Cardiac septum (tissue), 1 donor: ENCODE measurements at regions of chr21 and their contacts with region 1.

Region 1: GRCh38 chr21:39088831-39089380 is 94.3 kb downstream of the PSMG1 start:
- DNase-seq: no peak

Region 2: GRCh38 chr21:38913120-38913892 is 175.6 kb before region 1 on chr21:
- intact Hi-C with region 1: loop called (anchors 5 kb)
- DNase-seq: peak; percentile 88

Region 3: DNA sequence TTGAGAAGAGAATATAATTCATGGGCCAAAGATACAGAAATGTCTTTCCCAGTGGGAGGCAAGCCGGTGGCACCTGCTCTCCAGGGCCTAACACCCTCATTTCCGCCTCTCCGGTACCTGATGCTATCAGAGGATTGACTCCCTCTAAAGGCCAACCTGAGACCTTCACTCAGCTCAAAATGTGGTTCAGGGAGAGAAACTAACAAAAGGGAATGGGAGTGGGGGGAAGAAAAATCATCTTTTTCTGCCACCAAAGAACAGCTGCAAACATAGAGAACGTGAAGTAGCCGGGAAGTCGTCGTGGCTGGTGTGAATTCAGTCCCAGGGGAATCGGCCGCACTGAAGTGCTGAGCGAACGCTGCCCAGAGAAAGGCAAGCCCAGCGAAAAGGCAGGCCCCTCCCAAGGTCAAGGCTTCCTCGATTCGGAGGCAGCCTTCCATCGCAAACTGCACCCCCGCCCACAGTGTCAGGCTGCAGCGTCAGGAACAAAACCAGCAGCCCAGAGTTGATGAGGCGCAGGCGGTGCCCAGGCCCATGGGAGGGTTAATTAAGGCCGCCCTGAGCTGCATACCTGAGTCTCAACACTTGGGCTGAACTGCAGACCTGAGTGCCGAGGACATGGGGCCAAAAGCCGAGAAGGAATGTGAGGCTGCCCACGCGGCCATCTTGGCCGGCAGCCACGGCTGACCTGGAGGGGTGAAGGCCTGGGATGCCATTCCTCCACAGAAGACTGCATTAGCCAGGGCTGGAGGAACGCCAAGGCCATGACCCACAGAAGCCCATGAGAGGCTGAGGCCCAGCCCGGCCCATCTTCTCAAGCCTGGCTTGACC is 65.8 kb before region 1 on chr21:
- intact Hi-C with region 1: loop called (anchors 2 kb)
- DNase-seq: peak; percentile 87

Region 4: DNA sequence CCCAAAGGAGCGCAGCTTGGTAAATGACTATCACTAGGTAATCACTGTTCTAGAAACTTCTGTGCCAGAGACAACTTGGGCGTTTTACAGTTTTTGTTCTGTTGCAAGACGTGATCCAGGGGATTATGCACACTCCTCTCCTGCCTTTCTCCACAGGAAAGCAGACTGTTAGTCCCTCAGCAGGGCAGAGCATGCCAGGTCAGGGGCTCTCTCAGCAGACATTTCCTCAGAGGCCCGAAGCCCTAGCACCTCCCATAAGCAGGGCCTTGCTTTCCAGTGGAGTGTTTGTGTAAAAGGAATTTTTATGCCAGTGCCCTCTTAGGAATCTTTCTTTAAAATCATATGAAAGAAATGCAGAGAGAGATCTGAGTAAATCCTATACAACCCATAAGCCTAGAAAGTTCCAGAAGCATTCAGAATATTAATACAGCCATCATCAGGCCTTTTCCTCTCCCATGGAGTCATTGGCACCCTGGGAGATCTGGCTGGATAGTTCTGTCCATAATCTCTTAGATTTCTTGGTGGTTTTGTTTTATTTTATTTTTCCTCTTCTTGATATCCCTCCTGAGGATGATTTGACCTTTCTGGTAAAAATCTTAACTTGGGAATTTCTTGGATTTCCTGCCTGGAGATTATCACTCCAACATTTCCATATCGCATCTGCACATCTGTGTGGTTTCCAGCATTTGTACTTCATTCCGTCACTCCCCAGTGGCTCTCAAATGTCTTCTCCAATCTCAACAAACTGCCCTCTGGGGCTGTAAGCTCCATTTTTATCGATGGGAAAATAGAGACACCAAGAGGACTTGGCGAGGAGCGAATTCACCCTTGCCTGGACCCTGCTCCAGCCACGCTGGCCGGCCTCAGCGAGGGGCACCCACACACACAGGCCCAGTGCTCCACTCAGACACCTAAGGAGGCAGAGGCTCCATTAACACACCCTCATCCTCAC is 21.8 kb before region 1 on chr21:
- intact Hi-C with region 1: no loop called
- DNase-seq: no peak

Region 5: GRCh38 chr21:39125752-39126485 is 37.0 kb after region 1 on chr21:
- intact Hi-C with region 1: loop called (anchors 5 kb)
- DNase-seq: no peak